Heart right ventricle (tissue), 16 donors: ENCODE measurements at regions of chr1 and their contacts with region 1.

Region 1: GRCh38 chr1:160169553-160170399 is 18.4 kb downstream of the ATP1A4 start:
- DNase-seq: no peak
- ATAC-seq: no peak
- H3K4me3 ChIP-seq: no peak overlapping the region
- H3K27ac ChIP-seq: no peak overlapping the region
- H3K4me1 ChIP-seq: peaks cover 0 to 7% (median 0%) of the 10 kb centered on the region in 9 donors
- H3K27me3 ChIP-seq: peaks cover 0 to 12% (median 0%) of the 10 kb centered on the region in 7 donors
- CTCF ChIP-seq: no peak

Region 2: DNA sequence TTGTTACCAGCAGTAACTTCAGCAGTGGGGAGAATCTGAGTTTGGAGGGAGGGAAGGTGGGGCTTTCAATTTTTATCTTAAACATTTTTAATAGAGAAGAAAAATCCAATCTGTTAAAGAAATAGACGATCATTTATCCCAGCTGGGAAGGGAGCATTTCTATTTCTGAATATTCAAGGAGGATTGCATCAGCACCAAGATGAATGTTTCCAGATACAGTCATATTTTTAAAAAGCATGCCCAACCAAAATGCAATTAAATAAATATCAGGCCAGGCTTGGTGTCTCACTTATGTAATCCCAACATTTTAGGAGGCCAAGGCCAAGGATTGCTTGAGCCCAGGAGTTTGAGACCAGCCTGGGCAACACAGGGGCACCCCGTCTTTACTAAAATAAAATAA is 20.1 kb before region 1 on chr1:
- intact Hi-C with region 1: loop called in 1 of 10 experiments (anchors 2 kb)
- DNase-seq: no peak
- ATAC-seq: no peak
- H3K4me3 ChIP-seq: no peak overlapping the region
- H3K27ac ChIP-seq: no peak overlapping the region
- H3K4me1 ChIP-seq: peaks cover 0 to 20% (median 0%) of the 10 kb centered on the region in 9 donors
- H3K27me3 ChIP-seq: no peaks in the 10 kb centered on the region
- CTCF ChIP-seq: no peak

Region 3: DNA sequence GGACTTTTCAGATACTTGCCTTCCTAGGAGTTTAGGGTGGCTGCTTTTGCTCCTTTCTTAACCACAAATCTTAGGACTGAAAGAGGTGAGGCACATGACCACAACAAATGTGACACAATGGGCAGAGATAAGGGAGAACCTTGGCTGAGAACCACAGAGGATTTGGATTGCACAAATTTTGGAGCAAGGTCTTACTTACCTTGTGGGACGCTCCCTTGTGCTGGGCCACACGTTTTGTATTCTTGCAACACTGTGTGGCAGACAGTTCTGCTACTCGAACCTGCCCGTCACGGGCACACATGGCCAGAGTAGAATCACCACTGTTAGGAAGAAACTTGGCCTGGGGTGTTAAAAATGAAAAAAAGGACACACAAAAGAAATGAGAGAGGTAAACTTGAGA is 68.6 kb after region 1 on chr1:
- intact Hi-C with region 1: loop called in 1 of 10 experiments (anchors 5 kb)
- DNase-seq: no peak
- ATAC-seq: peak in 3 of 8 donors; percentile 23 to 53 (median 43)
- H3K4me3 ChIP-seq: no peak overlapping the region
- H3K27ac ChIP-seq: no peak overlapping the region
- H3K4me1 ChIP-seq: peaks cover 0 to 31% (median 10%) of the 10 kb centered on the region in 9 donors
- H3K27me3 ChIP-seq: no peaks in the 10 kb centered on the region
- CTCF ChIP-seq: no peak